ENCODE measurements at regions of chr6 and their contacts with region 1.

Region 1: GRCh38 chr6:34986845-34987246 is 97.8 kb downstream of the ANKS1A start:
- DNase-seq: peak; percentile 43 to 76
- ATAC-seq: peak; percentile 61 to 91 (median 82)
- H3K4me3 ChIP-seq: no peak overlapping the region
- H3K27ac ChIP-seq: peak overlapping the region in 3 of 10 donors; percentile 11 to 60 (median 18)
- H3K4me1 ChIP-seq: peaks cover 0 to 21% (median 8%) of the 10 kb centered on the region in 9 donors
- H3K27me3 ChIP-seq: no peaks in the 10 kb centered on the region
- CTCF ChIP-seq: peak; percentile 78 to 95 (median 86)

Region 2: GRCh38 chr6:34887753-34888513 is 98.9 kb before region 1 on chr6 and contains the start of gene TAF11:
- intact Hi-C with region 1: loop called in 2 of 10 experiments (anchors 5 kb)
- DNase-seq: peak; percentile 92 to 95
- ATAC-seq: peak; percentile 92 to 98 (median 94)
- H3K4me3 ChIP-seq: peak within 1 kb of the TSS; percentile 62 to 92 (median 78)
- H3K27ac ChIP-seq: peak within 1 kb of the TSS; percentile 62 to 93 (median 87)
- H3K4me1 ChIP-seq: peaks cover 8 to 57% (median 35%) of the 10 kb centered on the region in 9 donors
- H3K27me3 ChIP-seq: no peaks in the 10 kb centered on the region
- CTCF ChIP-seq: no peak
- total RNA-seq, gene TAF11: 16.3 to 22.1 (median 17.6) TPM

Region 3: GRCh38 chr6:35057449-35058357 is 70.9 kb after region 1 on chr6:
- intact Hi-C with region 1: loop called in 3 of 10 experiments (anchors 5 to 10 kb)
- DNase-seq: peak in 1 of 2 donors; percentile 63
- ATAC-seq: peak; percentile 62 to 82 (median 72)
- H3K4me3 ChIP-seq: peak overlapping the region in 3 of 10 donors; percentile 3 to 23 (median 8)
- H3K27ac ChIP-seq: peak overlapping the region; percentile 32 to 85 (median 68)
- H3K4me1 ChIP-seq: peaks cover 21 to 77% (median 55%) of the 10 kb centered on the region in 9 donors
- H3K27me3 ChIP-seq: no peaks in the 10 kb centered on the region
- CTCF ChIP-seq: no peak

Region 4: DNA sequence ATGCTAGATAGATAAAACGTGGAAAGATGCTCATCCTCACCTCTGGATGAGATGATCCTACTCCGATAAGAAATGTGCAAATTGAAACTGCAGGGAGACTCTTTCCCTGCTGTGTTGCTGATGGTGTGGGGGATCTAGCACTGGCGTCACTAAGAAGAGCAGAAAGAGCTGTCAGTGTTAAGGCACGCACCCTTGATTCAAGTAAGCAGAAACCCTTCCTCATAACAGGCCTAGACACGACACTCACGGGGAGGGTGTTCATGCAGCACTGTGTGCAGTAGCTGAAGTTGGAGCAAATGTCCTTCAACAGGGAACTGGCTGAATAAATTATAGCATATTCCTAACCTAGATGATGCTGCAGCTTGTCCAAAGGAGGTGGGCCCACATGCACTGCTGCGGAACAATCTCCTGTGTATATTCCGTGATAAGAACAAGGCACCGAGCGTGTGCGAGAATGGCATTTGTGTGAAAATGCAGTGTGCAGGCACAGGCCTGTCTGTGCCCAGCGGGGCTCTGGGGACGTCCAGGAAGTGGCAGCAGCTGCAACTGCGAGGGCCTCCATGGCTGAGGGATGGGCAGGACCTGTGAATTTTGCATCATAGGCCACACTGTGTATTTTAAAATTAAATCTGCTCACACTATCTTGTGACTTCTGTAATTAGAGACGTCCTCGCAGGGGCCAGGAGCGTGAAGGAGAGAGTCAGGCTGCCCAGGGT is 90.3 kb after region 1 on chr6:
- intact Hi-C with region 1: loop called in 1 of 10 experiments (anchors 10 kb)
- DNase-seq: no peak
- ATAC-seq: no peak
- H3K4me3 ChIP-seq: no peak overlapping the region
- H3K27ac ChIP-seq: no peak overlapping the region
- H3K4me1 ChIP-seq: peaks cover 0 to 35% (median 17%) of the 10 kb centered on the region in 9 donors
- H3K27me3 ChIP-seq: no peaks in the 10 kb centered on the region
- CTCF ChIP-seq: no peak

Region 5: DNA sequence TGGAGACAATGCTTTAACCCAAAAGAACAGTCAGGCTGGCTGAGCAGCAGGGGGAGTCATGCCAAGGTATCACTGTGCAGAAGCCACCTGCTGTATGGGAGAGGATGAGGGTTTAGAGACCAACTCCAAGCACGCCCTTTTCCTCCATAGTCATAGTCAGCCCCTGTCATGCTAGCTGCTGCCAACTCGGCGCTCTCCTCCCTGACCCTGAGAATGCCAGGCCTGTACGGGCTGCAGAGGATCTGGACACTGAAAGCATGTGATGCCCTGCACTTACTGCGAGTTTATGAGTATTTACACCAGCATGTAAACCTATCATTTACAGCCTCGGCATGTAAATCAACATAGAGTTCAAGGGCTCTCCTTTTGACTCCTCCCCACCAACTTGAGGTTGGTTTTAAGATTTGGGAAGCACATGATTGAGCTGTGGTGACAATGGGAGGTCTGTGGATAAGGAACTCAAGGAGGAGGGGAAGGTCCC is 215.3 kb after region 1 on chr6:
- intact Hi-C with region 1: loop called in 3 of 10 experiments (anchors 5 to 10 kb)
- DNase-seq: peak; percentile 25 to 29
- ATAC-seq: peak in 7 of 8 donors; percentile 64 to 81 (median 73)
- H3K4me3 ChIP-seq: no peak overlapping the region
- H3K27ac ChIP-seq: peak overlapping the region in 4 of 10 donors; percentile 9 to 51 (median 28)
- H3K4me1 ChIP-seq: peaks cover 0 to 24% (median 14%) of the 10 kb centered on the region in 9 donors
- H3K27me3 ChIP-seq: peaks cover 0 to 10% (median 0%) of the 10 kb centered on the region in 7 donors
- CTCF ChIP-seq: no peak

Region 6: GRCh38 chr6:35370124-35370741 is 383.4 kb after region 1 on chr6:
- intact Hi-C with region 1: no loop called
- DNase-seq: peak; percentile 49 to 80
- ATAC-seq: peak; percentile 85 to 98 (median 94)
- H3K4me3 ChIP-seq: no peak overlapping the region
- H3K27ac ChIP-seq: peak overlapping the region in 8 of 10 donors; percentile 26 to 83 (median 52)
- H3K4me1 ChIP-seq: peaks cover 14 to 54% (median 35%) of the 10 kb centered on the region in 9 donors
- H3K27me3 ChIP-seq: no peaks in the 10 kb centered on the region
- CTCF ChIP-seq: no peak